ENCODE measurements at regions of chr19 and their contacts with region 1.

Region 1: DNA sequence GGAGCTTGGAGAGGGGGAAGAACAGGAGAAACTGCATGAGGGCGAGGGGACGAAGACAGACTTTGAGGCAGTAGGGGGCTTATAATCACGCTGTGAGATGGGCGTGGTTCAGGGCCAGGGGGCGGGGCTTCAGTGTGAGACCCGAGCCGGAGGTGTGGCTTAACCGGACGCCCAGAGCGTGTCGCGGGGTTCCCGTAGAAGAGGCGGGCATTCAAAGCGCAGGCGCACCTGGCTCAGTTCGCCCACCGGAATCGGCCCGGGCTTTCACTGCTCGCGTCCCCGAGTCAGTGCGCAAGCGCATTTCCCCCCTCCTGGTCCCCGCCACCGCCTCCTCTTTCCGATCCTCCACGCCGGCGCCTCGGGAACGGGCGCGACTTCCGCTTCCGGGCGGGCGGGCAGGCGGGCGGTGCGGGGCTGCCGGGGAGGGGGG is 225 bp upstream of the ZNF865 start:
- DNase-seq: peak; percentile 93 to 99 (median 98)
- ATAC-seq: peak; percentile 78
- H3K4me3 ChIP-seq: peak overlapping the region; percentile 64
- H3K4me3 Mint-ChIP-seq: peak overlapping the region; percentile 86
- H3K27ac ChIP-seq: peak overlapping the region; percentile 85 to 92
- H3K27ac Mint-ChIP-seq: peak overlapping the region; percentile 84
- H3K4me1 ChIP-seq: peaks cover 45% of the 10 kb centered on the region
- H3K4me1 Mint-ChIP-seq: peaks cover 54% of the 10 kb centered on the region
- H3K27me3 ChIP-seq: no peaks in the 10 kb centered on the region
- H3K27me3 Mint-ChIP-seq: no peaks in the 10 kb centered on the region
- CTCF ChIP-seq: no peak

Region 2: DNA sequence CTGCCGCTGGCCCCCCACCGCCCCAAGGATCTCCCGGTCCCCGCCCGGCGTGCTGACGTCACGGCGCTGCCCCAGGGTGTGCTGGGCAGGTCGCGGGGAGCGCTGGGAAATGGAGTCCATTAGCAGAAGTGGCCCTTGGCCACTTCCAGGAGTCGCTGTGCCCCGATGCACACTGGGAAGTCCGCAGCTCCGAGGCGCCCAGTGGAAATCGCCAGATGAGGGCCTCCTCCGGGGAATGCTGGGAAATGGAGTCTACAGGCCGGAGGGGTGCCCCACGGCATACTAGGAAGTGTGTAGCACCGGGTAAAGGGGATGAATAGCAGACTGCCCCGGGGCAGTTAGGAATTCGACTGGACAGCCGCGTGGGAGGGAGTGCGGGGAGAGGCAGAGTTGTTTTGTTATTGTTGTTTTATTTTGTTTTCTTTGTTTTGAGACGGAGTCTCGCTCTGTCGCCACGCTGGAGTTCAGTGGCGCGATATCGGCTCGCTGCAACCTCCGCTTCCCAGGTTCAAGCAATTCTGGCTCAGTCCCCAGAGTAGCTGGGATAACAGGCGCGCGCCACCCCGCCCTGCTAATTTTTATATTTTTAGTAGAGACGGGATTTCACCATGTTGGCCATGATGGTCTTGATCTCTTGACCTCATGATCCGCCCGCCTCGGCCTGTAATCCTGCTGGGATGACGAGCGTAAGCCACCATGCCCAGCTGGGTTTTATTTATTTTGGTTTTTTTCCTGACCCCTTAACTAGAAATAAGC is 487.4 kb before region 1 on chr19 and contains the start of gene PPP1R12C:
- CTCF ChIA-PET with region 1: no interaction called
- POLR2A ChIA-PET with region 1: no interaction called
- intact Hi-C with region 1: loop called in 1 of 2 experiments (anchors 2 kb)
- DNase-seq: peak; percentile 91 to 99 (median 97)
- ATAC-seq: peak; percentile 89
- H3K4me3 ChIP-seq: peak within 1 kb of the TSS; percentile 70
- H3K4me3 Mint-ChIP-seq: peak within 1 kb of the TSS; percentile 93
- H3K27ac ChIP-seq: peak within 1 kb of the TSS; percentile 27 to 44
- H3K27ac Mint-ChIP-seq: peak within 1 kb of the TSS; percentile 86
- H3K4me1 ChIP-seq: peaks cover 47% of the 10 kb centered on the region
- H3K4me1 Mint-ChIP-seq: peaks cover 37% of the 10 kb centered on the region
- H3K27me3 ChIP-seq: no peaks in the 10 kb centered on the region
- H3K27me3 Mint-ChIP-seq: no peaks in the 10 kb centered on the region
- CTCF ChIP-seq: no peak
- total RNA-seq, gene PPP1R12C: 123 to 136 TPM

Region 3: DNA sequence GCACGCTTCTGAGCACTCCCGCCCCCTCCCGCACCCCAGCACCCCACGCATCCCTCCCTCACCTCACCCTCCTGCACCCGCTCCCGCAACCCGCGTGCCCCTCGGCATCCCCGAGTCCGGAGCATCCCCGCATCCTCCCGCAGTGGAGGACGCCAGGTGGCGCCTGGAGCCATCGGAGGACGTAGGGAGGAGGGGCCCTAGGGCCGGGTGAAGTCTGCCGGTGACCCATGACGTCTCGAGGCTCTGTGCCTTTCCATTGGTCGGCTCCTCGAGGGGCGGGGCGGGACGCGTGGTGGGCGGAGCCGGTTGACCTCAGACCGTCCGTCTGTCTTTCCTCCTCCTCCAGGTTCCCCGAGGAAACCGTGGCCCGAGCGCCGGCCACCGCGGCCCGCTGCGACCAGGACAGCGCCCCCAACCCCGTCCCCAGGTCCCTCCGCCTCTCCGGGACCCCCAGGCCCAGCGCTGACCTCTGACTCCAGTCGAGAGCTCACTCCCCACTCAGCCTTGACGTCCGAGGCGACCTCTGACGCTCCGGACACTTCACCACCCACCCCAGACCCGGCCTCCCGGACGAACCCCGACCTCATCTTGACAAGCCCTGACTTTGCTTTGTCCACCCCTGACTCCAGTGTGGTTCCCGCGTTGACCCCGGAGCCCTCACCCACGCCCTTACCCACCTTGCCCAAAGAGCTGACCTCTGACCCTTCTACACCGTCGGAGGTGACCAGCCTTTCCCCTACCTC is 88.2 kb before region 1 on chr19:
- CTCF ChIA-PET with region 1: no interaction called
- POLR2A ChIA-PET with region 1: no interaction called
- intact Hi-C with region 1: loop called (anchors 1 kb)
- DNase-seq: peak; percentile 82 to 95 (median 88)
- ATAC-seq: peak; percentile 100
- H3K4me3 ChIP-seq: peak overlapping the region; percentile 32
- H3K4me3 Mint-ChIP-seq: peak overlapping the region; percentile 74
- H3K27ac ChIP-seq: peak overlapping the region in 1 of 2 donors; percentile 37
- H3K27ac Mint-ChIP-seq: peak overlapping the region; percentile 73
- H3K4me1 ChIP-seq: peaks cover 11% of the 10 kb centered on the region
- H3K4me1 Mint-ChIP-seq: peaks cover 4% of the 10 kb centered on the region
- H3K27me3 ChIP-seq: no peaks in the 10 kb centered on the region
- H3K27me3 Mint-ChIP-seq: no peaks in the 10 kb centered on the region
- CTCF ChIP-seq: peak; percentile 78

Region 4: GRCh38 chr19:55624109-55625003 is 19.1 kb after region 1 on chr19 and contains the start of gene ZNF784:
- CTCF ChIA-PET with region 1: interaction called, 60 read pairs
- POLR2A ChIA-PET with region 1: interaction called, 50 read pairs
- intact Hi-C with region 1: loop called (anchors 1 kb)
- DNase-seq: peak; percentile 88 to 98 (median 93)
- ATAC-seq: peak; percentile 69
- H3K4me3 ChIP-seq: peak within 1 kb of the TSS; percentile 68
- H3K4me3 Mint-ChIP-seq: peak within 1 kb of the TSS; percentile 98
- H3K27ac ChIP-seq: peak within 1 kb of the TSS; percentile 89 to 94
- H3K27ac Mint-ChIP-seq: peak within 1 kb of the TSS; percentile 100
- H3K4me1 ChIP-seq: peaks cover 56% of the 10 kb centered on the region
- H3K4me1 Mint-ChIP-seq: peaks cover 55% of the 10 kb centered on the region
- H3K27me3 ChIP-seq: no peaks in the 10 kb centered on the region
- H3K27me3 Mint-ChIP-seq: no peaks in the 10 kb centered on the region
- CTCF ChIP-seq: no peak
- total RNA-seq, gene ZNF784: 11.2 to 11.8 TPM

Region 5: GRCh38 chr19:55653758-55654539 is 48.7 kb after region 1 on chr19:
- CTCF ChIA-PET with region 1: interaction called, 4 read pairs
- POLR2A ChIA-PET with region 1: interaction called, 38 read pairs
- intact Hi-C with region 1: no loop called
- DNase-seq: peak; percentile 98 to 100 (median 100)
- ATAC-seq: peak; percentile 79
- H3K4me3 ChIP-seq: peak overlapping the region; percentile 70
- H3K4me3 Mint-ChIP-seq: peak overlapping the region; percentile 94
- H3K27ac ChIP-seq: peak overlapping the region; percentile 96 to 100
- H3K27ac Mint-ChIP-seq: peak overlapping the region; percentile 93
- H3K4me1 ChIP-seq: peaks cover 46% of the 10 kb centered on the region
- H3K4me1 Mint-ChIP-seq: peaks cover 43% of the 10 kb centered on the region
- H3K27me3 ChIP-seq: no peaks in the 10 kb centered on the region
- H3K27me3 Mint-ChIP-seq: no peaks in the 10 kb centered on the region
- CTCF ChIP-seq: peak; percentile 100